GM12878 (cell line): ENCODE measurements at regions of chr7 and their contacts with region 1.

Region 1: DNA sequence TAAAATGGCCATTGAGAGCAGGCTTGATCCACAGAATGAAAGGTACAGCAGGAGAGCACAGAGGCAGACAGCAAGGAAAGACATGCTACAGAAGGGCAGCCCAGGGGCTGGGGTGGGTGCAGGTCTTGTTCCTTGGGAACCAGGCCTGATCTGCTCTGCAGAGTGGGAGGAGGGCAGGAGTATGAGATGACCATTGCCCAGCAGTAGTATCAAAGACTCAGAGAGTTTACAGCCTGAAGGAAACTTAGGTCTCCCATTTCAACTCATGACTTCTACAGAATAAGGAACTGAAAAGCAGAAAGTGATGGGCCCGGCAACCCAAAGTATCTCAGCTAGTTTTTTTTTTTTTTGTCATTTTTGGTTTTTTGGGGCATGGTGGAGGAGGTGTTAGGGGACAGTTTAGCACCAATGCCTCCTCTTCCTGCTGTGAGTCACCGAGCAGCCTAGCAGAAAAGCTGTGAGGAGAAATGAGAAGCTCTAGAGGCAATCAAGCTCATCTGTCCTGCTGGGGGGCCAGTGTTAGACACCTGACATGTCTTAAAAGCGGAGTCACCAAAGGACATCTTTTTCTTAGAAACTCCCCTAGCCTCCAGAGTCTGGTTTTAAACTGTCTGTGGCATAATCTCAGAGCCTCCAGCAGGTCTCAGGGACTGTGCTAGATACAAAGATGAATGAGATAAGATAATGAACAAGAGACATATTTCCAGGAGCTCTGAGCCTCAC is 34.3 kb upstream of the HERPUD2 start:
- DNase-seq: peak; percentile 96
- ATAC-seq: peak; percentile 80
- H3K4me3 ChIP-seq: peak overlapping the region; percentile 61
- H3K27ac ChIP-seq: peak overlapping the region; percentile 95
- H3K4me1 ChIP-seq: peaks cover 52% of the 10 kb centered on the region
- H3K27me3 ChIP-seq: no peaks in the 10 kb centered on the region
- CTCF ChIP-seq: no peak
- EP300 ChIP-seq: peak; percentile 96 to 99
- POLR2A ChIP-seq: peak; percentile 61
- RAD21 ChIP-seq: no peak; the same call in none of the 2 replicates

Region 2: GRCh38 chr7:34759452-34760125 is 969.6 kb before region 1 on chr7:
- CTCF ChIA-PET with region 1: no interaction called
- POLR2A ChIA-PET with region 1: interaction called, 3 read pairs
- RAD21 ChIA-PET with region 1: interaction called, 5 read pairs
- SMC1A ChIA-PET with region 1: interaction called, 4 read pairs
- in situ Hi-C with region 1: no loop called
- intact Hi-C with region 1: loop called (anchors 10 kb)
- DNase-seq: no peak
- ATAC-seq: no peak
- H3K4me3 ChIP-seq: no peak overlapping the region
- H3K27ac ChIP-seq: no peak overlapping the region
- H3K4me1 ChIP-seq: no peaks in the 10 kb centered on the region
- H3K27me3 ChIP-seq: no peaks in the 10 kb centered on the region
- CTCF ChIP-seq: peak; percentile 55 to 57 (median 56); a peak in 5 of 6 replicates
- EP300 ChIP-seq: no peak
- POLR2A ChIP-seq: no peak
- RAD21 ChIP-seq: peak; percentile 32; the same call in 1 of the 2 replicates

Region 3: DNA sequence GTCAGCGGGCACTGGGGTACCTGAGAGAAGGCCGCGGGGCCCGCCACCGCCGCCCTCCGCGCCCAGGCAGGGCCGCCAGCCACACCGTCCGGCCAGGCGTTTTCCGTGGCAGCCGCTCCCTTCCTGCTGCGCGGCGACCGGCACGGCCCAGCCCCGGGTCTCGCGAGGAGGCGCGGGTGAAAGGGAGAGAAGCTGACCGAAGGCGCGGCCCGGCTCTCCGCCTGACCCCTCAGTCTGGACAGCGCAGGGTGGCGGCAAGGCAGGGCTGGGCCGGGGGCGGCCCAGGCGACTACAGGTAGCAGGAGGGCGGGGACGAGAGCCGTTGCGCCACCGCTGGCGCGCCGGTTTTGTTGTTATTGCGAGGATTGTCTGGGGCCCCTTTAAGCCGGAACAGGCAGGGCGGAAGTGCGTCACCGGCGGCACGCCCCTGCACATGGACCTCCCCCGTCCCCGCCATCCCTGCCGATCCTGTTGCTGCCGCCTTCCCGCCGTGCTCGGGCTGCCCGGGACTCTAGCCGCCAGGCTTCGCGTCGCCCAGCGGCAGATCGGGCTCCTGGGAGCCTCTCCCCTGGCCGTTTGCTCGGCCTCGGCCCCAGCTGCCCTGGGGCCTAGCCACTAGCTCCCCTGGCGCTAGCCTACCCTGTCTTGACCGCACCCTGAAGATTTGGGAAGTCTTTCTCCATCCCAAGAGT is 34.3 kb before region 1 on chr7 and contains the start of gene HERPUD2:
- CTCF ChIA-PET with region 1: interaction called, 16 read pairs
- POLR2A ChIA-PET with region 1: interaction called, 26 read pairs
- RAD21 ChIA-PET with region 1: interaction called, 152 read pairs
- SMC1A ChIA-PET with region 1: interaction called, 149 read pairs
- in situ Hi-C with region 1: no loop called
- intact Hi-C with region 1: loop called (anchors 1 kb)
- DNase-seq: peak; percentile 71
- ATAC-seq: peak; percentile 86
- H3K4me3 ChIP-seq: peak within 1 kb of the TSS; percentile 94
- H3K27ac ChIP-seq: peak within 1 kb of the TSS; percentile 91
- H3K4me1 ChIP-seq: no peaks in the 10 kb centered on the region
- H3K27me3 ChIP-seq: no peaks in the 10 kb centered on the region
- CTCF ChIP-seq: no peak; a peak in 1 of 6 replicates
- EP300 ChIP-seq: 0 out of 4 replicates have a peak, but pooled peaks of 1 of the 2 experiments have one; percentile 10
- POLR2A ChIP-seq: peak; percentile 93
- RAD21 ChIP-seq: no peak
- polyA plus RNA-seq, gene HERPUD2: 4.7 to 6.8 TPM

Region 4: DNA sequence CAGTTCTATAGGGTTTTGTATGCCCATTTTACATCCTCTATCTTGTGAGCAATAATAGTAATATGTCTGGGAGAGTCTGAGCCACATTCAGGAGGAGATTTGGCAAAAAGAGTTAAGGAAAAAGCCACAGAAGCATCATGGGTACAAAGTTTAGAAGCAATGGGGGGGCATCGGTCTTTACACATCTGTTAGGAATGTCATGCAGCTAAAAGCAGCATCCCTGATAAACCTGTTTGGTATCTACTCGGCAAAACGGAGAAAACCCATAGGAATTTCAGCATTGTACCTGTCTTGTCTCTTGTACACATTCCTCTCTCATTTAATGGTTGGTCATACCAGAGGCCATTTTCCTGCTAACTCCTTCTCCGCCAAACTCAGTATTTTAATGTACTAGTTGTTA is 21.8 kb before region 1 on chr7:
- CTCF ChIA-PET with region 1: interaction called, 211 read pairs
- POLR2A ChIA-PET with region 1: interaction called, 53 read pairs
- RAD21 ChIA-PET with region 1: interaction called, 110 read pairs
- SMC1A ChIA-PET with region 1: interaction called, 337 read pairs
- in situ Hi-C with region 1: no loop called
- intact Hi-C with region 1: loop called (anchors 1 kb)
- DNase-seq: no peak
- ATAC-seq: no peak
- H3K4me3 ChIP-seq: no peak overlapping the region
- H3K27ac ChIP-seq: no peak overlapping the region
- H3K4me1 ChIP-seq: peaks cover 5% of the 10 kb centered on the region; the same call in 1 of the 2 replicates
- H3K27me3 ChIP-seq: no peaks in the 10 kb centered on the region
- CTCF ChIP-seq: no peak
- EP300 ChIP-seq: no peak
- POLR2A ChIP-seq: no peak
- RAD21 ChIP-seq: no peak

Region 5: DNA sequence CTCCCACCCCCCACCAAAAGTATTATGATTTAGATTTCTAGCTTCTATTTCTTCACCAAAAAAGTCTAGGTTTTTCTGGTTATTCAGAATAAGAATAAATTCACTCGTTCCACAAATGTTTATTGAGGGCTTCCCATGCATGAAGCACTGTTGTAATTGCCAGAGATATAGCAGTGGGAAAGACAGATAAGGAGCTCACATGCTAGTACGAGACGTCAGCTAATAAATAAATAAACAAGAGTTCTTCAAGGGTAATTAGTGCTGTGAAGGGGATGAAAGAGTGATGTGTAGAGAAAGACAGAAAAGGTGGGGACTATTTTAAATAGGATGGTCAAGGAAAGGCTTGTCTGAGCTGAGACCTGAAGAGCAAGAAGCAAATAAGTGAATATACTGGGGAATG is 33.6 kb after region 1 on chr7:
- CTCF ChIA-PET with region 1: no interaction called
- POLR2A ChIA-PET with region 1: interaction called, 12 read pairs
- RAD21 ChIA-PET with region 1: interaction called, 4 read pairs
- SMC1A ChIA-PET with region 1: no interaction called
- in situ Hi-C with region 1: no loop called
- intact Hi-C with region 1: no loop called
- DNase-seq: no peak
- ATAC-seq: no peak
- H3K4me3 ChIP-seq: no peak overlapping the region
- H3K27ac ChIP-seq: no peak overlapping the region
- H3K4me1 ChIP-seq: no peaks in the 10 kb centered on the region
- H3K27me3 ChIP-seq: no peaks in the 10 kb centered on the region
- CTCF ChIP-seq: no peak
- EP300 ChIP-seq: no peak
- POLR2A ChIP-seq: no peak
- RAD21 ChIP-seq: no peak

Region 6: DNA sequence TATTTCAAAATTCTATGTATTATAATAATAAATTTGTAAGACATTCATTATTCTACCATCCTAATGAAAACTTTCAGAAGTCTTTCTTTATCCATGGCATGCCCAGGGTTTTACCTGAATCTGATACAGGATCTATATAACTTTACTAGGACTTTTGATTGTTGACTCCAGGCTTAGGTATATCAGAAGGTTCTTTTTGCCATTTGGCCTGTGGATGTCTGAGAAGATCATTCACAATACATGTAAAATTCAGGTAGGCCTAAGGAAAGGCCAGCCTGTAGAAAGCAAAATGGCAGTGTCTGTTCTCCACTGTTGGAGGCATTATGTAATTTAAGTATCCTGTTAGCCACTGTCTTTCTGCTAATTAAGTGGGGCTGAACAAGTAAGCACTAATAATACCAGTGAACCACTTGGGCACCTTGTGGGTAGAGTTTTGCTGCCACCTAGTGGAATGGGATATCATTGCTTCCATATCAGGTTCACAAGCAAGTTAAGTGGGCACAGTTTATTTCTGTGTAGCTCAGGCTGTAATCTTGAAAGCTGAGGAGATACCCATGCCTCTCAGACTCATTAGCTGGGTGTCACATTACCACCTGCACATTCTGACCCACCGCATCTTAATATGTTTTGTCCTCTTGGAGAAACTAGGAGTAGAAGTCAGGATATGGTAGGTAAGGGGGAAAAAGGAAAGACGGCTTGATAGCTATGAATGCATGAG is 177.1 kb after region 1 on chr7:
- CTCF ChIA-PET with region 1: interaction called, 20 read pairs
- POLR2A ChIA-PET with region 1: no interaction called
- RAD21 ChIA-PET with region 1: interaction called, 17 read pairs
- SMC1A ChIA-PET with region 1: interaction called, 18 read pairs
- in situ Hi-C with region 1: no loop called
- intact Hi-C with region 1: loop called (anchors 5 kb)
- DNase-seq: peak; percentile 68
- ATAC-seq: peak; percentile 97
- H3K4me3 ChIP-seq: no peak overlapping the region
- H3K27ac ChIP-seq: no peak overlapping the region
- H3K4me1 ChIP-seq: no peaks in the 10 kb centered on the region
- H3K27me3 ChIP-seq: no peaks in the 10 kb centered on the region
- CTCF ChIP-seq: peak; percentile 79 to 82 (median 80)
- EP300 ChIP-seq: no peak
- POLR2A ChIP-seq: 0 out of 2 replicates have a peak, but pooled peaks have one; percentile 35
- RAD21 ChIP-seq: peak; percentile 91

Region 7: DNA sequence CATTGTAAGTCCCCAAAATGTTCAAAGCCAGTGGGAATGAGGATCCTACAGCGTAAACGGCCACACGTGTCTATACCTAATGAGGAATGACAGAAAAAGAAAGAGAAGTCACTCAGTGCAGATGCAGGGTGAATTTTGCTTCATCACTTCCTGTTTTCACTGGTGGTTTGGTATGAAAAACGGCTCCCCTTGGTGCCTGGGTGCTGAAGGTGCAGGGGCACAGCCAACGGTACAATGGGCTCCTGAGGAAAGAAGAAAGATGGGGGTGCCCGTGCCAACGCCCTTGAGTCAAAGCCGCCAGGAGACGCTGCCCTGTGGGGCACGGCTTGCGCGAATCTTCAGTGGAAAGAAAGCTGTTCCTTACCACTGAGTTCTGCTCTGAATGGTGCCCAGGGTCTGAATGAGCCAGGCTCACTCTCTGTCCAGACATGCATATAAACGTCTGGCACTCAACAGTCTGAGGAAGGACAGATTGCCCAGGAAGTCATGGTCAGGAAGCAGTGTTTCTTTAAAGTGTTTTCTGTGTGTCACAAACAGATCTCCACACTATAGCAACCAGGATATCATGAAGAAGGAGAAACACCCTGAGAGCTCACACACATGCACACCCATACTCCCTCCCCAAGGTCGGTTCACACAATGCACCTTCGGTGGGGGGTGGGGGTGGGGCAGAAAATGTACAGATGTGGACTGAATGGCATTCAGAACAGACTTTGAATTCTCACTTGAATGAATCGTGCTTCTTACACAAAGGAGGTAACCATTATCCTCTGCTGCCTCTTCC is 1613.7 kb after region 1 on chr7:
- CTCF ChIA-PET with region 1: no interaction called
- POLR2A ChIA-PET with region 1: no interaction called
- RAD21 ChIA-PET with region 1: no interaction called
- SMC1A ChIA-PET with region 1: no interaction called
- in situ Hi-C with region 1: loop called (anchors 10 kb)
- intact Hi-C with region 1: no loop called
- DNase-seq: peak; percentile 69
- ATAC-seq: peak; percentile 70
- H3K4me3 ChIP-seq: peak overlapping the region; percentile 69
- H3K27ac ChIP-seq: peak overlapping the region; percentile 85
- H3K4me1 ChIP-seq: peaks cover 31% of the 10 kb centered on the region
- H3K27me3 ChIP-seq: no peaks in the 10 kb centered on the region
- CTCF ChIP-seq: peak; percentile 19 to 58 (median 41); a peak in 5 of 6 replicates
- EP300 ChIP-seq: no peak
- POLR2A ChIP-seq: peak; percentile 58; the same call in 1 of the 2 replicates
- RAD21 ChIP-seq: peak; percentile 57